ENCODE measurements at regions of chr11 and their contacts with region 1.

Region 1: GRCh38 chr11:8092587-8093424 is 11.8 kb downstream of the TUB start:
- DNase-seq: peak; percentile 61
- H3K4me3 ChIP-seq: no peak overlapping the region
- H3K27ac ChIP-seq: no peak overlapping the region
- H3K4me1 ChIP-seq: no peaks in the 10 kb centered on the region
- H3K27me3 ChIP-seq: no peaks in the 10 kb centered on the region
- CTCF ChIP-seq: peak; percentile 67 to 68
- POLR2A ChIP-seq: no peak

Region 2: GRCh38 chr11:7904914-7905313 is 187.9 kb before region 1 on chr11:
- CTCF ChIA-PET with region 1: interaction called, 3 read pairs
- POLR2A ChIA-PET with region 1: no interaction called
- dilution Hi-C with region 1: no loop called
- intact Hi-C with region 1: loop called (anchors 5 kb)
- DNase-seq: peak; percentile 38
- H3K4me3 ChIP-seq: no peak overlapping the region
- H3K27ac ChIP-seq: no peak overlapping the region
- H3K4me1 ChIP-seq: no peaks in the 10 kb centered on the region
- H3K27me3 ChIP-seq: peaks cover 2 to 8% of the 10 kb centered on the region in 2 experiments
- CTCF ChIP-seq: peak in 1 of 2 donors; percentile 11
- POLR2A ChIP-seq: no peak

Region 3: GRCh38 chr11:8070417-8071115 is 22.2 kb before region 1 on chr11:
- CTCF ChIA-PET with region 1: interaction called, 11 read pairs
- POLR2A ChIA-PET with region 1: no interaction called
- dilution Hi-C with region 1: no loop called
- intact Hi-C with region 1: no loop called
- DNase-seq: peak; percentile 21
- H3K4me3 ChIP-seq: no peak overlapping the region
- H3K27ac ChIP-seq: no peak overlapping the region
- H3K4me1 ChIP-seq: peaks cover 3% of the 10 kb centered on the region
- H3K27me3 ChIP-seq: peaks cover 8 to 10% of the 10 kb centered on the region in 2 experiments
- CTCF ChIP-seq: peak in 1 of 2 donors; percentile 18
- POLR2A ChIP-seq: no peak

Region 4: DNA sequence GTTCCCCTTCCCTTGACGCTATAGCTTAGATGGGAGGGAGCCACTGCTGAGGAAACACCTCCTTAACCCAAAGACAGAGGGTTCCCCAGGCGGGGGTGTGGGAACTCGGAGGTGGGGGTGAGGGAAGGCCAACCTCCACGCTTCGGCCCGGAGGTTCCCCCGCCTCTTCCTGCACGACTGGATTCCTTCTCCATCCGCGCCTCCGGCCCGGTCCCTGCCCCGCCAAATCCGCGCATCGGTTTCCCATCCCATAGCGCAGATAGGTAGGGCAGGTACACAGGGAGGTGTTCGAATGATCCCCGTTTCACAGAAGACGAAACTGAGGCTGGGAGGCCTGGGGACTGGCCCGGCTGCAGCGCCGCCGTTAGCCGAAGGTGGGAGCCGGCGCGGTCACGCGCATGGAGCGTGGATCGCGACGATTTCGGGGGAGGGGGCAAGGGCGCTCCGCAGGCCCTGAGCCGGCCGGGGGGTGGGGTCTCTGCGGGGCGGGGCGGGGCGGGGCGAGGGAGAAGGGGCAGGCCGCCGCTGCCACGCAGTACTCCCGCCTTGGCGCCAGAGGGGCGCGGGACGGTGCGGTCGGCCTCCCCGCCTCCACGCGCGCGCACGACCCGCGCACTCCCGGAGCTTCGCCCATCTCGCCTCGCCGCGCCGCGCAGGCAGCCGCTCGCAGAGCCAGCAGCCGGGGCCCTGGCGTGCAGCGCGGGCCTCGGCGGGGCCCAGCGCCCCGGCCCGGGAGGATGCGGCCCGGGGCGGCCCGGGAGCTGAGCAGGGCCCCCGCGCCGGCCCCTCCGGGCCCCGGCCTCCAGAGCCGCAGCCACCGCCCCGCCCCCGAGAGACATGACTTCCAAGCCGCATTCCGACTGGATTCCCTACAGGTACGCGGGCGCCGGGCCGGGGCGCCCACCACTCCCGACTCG is 11.9 kb before region 1 on chr11 and contains the start of gene TUB:
- CTCF ChIA-PET with region 1: interaction called, 84 read pairs
- POLR2A ChIA-PET with region 1: no interaction called
- dilution Hi-C with region 1: no loop called
- intact Hi-C with region 1: no loop called
- DNase-seq: no peak
- H3K4me3 ChIP-seq: peak within 1 kb of the TSS in 2 of 3 experiments; percentile 35 to 42
- H3K27ac ChIP-seq: no peak within 1 kb of the TSS
- H3K4me1 ChIP-seq: peaks cover 6% of the 10 kb centered on the region
- H3K27me3 ChIP-seq: peaks cover 2 to 5% of the 10 kb centered on the region in 2 experiments
- CTCF ChIP-seq: no peak
- POLR2A ChIP-seq: no peak
- total RNA-seq, gene TUB: 3.9 and 4.9 TPM in 2 replicates